WTC11 (cell line): ENCODE measurements at regions of chr1 and their contacts with region 1.

Region 1: DNA sequence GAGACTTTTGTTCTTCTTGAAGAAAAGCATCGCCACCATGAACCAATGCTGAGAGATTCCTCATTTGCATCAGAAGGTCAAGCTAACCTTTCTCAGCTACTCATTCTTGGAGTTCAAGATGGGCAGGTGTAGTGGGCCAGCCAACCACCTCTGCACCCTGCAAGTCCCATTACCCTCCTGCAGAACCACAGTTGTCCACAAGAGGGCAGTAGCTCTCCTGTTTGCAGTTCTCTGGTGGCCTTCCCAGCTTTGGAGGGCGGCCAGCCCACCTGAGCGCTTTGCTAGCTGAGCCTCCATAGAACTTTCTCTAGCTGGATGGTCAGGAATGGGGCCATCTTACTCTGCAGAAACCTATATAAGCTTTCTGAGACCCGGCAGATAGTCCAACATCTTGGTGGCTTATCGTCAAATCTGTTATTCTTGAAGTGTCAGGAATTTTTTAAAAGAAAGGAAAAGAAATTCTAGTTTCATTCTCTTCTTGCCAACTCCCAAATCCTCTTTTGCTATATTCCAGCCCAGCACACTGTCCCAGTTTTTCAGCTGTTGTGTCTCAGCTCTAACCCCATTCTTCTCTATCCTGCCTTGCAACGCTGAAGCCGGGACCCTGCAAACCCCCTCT is 11.0 kb upstream of the LMX1A start:
- DNase-seq: peak; percentile 97
- ATAC-seq: peak; percentile 93
- H3K4me3 Mint-ChIP-seq: no peak overlapping the region
- H3K27ac Mint-ChIP-seq: no peak overlapping the region
- H3K4me1 Mint-ChIP-seq: peaks cover 12% of the 10 kb centered on the region
- H3K27me3 Mint-ChIP-seq: peaks cover 33% of the 10 kb centered on the region
- CTCF ChIP-seq: peak; percentile 95

Region 2: DNA sequence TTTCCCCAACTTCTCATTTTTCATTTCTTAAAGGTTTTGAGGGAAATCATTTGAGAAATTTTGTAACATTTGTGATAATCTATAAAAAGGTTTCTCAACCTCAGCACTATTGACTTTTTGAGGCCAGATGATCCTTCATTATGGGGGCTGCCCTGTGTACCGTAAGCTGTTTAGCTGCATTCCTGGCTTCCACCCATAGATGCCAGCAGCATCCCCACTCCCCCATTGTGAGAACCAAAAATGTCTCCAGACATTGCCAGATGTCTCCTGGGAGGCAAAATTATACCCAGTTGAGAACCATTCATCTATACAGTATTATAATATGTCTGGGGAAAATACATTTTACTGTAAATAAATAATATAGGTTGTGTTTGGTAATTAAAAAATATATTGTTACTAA is 662.5 kb before region 1 on chr1:
- CTCF ChIA-PET with region 1: no interaction called
- POLR2A ChIA-PET with region 1: no interaction called
- DNase-seq: no peak
- ATAC-seq: peak; percentile 67
- H3K4me3 Mint-ChIP-seq: no peak overlapping the region
- H3K27ac Mint-ChIP-seq: no peak overlapping the region
- H3K4me1 Mint-ChIP-seq: peaks cover 74% of the 10 kb centered on the region
- H3K27me3 Mint-ChIP-seq: no peaks in the 10 kb centered on the region
- CTCF ChIP-seq: no peak

Region 3: DNA sequence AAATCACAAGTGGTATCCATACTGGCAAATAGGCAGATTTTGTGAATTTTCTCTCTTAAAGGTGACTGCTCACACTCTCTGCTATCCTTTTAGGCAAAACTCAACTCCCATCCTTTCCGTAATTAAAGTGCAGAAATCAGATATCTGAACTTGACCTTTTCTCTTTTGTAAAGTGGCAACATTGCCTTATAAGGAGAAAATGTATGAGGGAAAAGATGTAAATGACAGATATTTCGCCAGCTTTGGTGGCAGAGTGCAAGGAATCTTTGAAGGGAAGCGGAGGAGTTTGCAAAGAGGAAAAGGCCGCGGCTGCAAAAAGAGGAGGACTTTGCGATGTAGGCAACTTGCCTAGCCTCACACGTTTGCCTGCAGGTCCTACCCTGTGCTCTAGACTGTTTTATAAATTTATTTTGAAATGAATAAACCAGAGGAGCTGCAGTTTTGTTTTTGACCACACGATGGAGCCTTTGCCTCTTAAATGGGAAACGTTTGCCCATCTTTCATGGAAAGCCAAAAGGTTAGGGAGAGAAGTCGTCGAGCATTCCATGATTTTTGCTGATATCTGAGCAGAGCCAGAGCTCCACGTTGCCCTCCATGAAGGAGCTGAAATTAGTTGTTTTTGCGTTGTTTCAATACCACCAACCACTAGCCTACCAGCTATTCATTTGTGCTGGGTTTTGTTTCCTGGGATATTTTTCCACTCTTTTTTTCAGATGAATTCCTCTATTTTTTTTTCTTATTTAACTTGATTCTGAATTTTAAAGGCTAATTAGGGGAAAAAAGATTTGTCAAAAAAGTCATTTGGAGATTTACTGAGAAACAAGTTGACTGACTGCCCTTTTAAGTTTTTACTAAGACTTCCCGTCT is 253.2 kb before region 1 on chr1:
- CTCF ChIA-PET with region 1: interaction called, 30 read pairs
- POLR2A ChIA-PET with region 1: interaction called, 3 read pairs
- DNase-seq: peak; percentile 72
- ATAC-seq: peak; percentile 75
- H3K4me3 Mint-ChIP-seq: no peak overlapping the region
- H3K27ac Mint-ChIP-seq: no peak overlapping the region
- H3K4me1 Mint-ChIP-seq: peaks cover 13% of the 10 kb centered on the region
- H3K27me3 Mint-ChIP-seq: peaks cover 50% of the 10 kb centered on the region
- CTCF ChIP-seq: peak; percentile 69

Region 4: GRCh38 chr1:165144757-165145397 is 222.6 kb before region 1 on chr1:
- CTCF ChIA-PET with region 1: interaction called, 27 read pairs
- POLR2A ChIA-PET with region 1: no interaction called
- DNase-seq: peak; percentile 71
- ATAC-seq: peak; percentile 90
- H3K4me3 Mint-ChIP-seq: no peak overlapping the region
- H3K27ac Mint-ChIP-seq: no peak overlapping the region
- H3K4me1 Mint-ChIP-seq: no peaks in the 10 kb centered on the region
- H3K27me3 Mint-ChIP-seq: peaks cover 29% of the 10 kb centered on the region
- CTCF ChIP-seq: no peak

Region 5: GRCh38 chr1:165257969-165258459 is 109.5 kb before region 1 on chr1:
- CTCF ChIA-PET with region 1: interaction called, 91 read pairs
- POLR2A ChIA-PET with region 1: no interaction called
- DNase-seq: peak; percentile 87
- ATAC-seq: peak; percentile 92
- H3K4me3 Mint-ChIP-seq: no peak overlapping the region
- H3K27ac Mint-ChIP-seq: no peak overlapping the region
- H3K4me1 Mint-ChIP-seq: peaks cover 13% of the 10 kb centered on the region
- H3K27me3 Mint-ChIP-seq: peaks cover 30% of the 10 kb centered on the region
- CTCF ChIP-seq: peak; percentile 79

Region 6: GRCh38 chr1:165317612-165318011 is 49.9 kb before region 1 on chr1:
- CTCF ChIA-PET with region 1: interaction called, 18 read pairs
- POLR2A ChIA-PET with region 1: interaction called, 3 read pairs
- DNase-seq: no peak
- ATAC-seq: no peak
- H3K4me3 Mint-ChIP-seq: no peak overlapping the region
- H3K27ac Mint-ChIP-seq: no peak overlapping the region
- H3K4me1 Mint-ChIP-seq: no peaks in the 10 kb centered on the region
- H3K27me3 Mint-ChIP-seq: no peaks in the 10 kb centered on the region; the same call in none of the 2 replicates
- CTCF ChIP-seq: no peak

Region 7: GRCh38 chr1:165355977-165356811 is 11.3 kb before region 1 on chr1 and contains the start of gene LMX1A:
- CTCF ChIA-PET with region 1: interaction called, 137 read pairs
- POLR2A ChIA-PET with region 1: no interaction called
- DNase-seq: peak; percentile 53
- ATAC-seq: peak; percentile 11
- H3K4me3 Mint-ChIP-seq: peak within 1 kb of the TSS; percentile 74
- H3K27ac Mint-ChIP-seq: no peak within 1 kb of the TSS
- H3K4me1 Mint-ChIP-seq: peaks cover 47% of the 10 kb centered on the region
- H3K27me3 Mint-ChIP-seq: peaks cover 96% of the 10 kb centered on the region
- CTCF ChIP-seq: no peak
- total RNA-seq, gene LMX1A: not detected in 3 replicates

Region 8: GRCh38 chr1:165392634-165393571 is 25.4 kb after region 1 on chr1:
- CTCF ChIA-PET with region 1: interaction called, 27 read pairs
- POLR2A ChIA-PET with region 1: no interaction called
- DNase-seq: peak; percentile 84
- ATAC-seq: peak; percentile 99
- H3K4me3 Mint-ChIP-seq: peak overlapping the region; percentile 64
- H3K27ac Mint-ChIP-seq: no peak overlapping the region
- H3K4me1 Mint-ChIP-seq: peaks cover 7% of the 10 kb centered on the region
- H3K27me3 Mint-ChIP-seq: peaks cover 24% of the 10 kb centered on the region
- CTCF ChIP-seq: peak; percentile 87

Region 9: DNA sequence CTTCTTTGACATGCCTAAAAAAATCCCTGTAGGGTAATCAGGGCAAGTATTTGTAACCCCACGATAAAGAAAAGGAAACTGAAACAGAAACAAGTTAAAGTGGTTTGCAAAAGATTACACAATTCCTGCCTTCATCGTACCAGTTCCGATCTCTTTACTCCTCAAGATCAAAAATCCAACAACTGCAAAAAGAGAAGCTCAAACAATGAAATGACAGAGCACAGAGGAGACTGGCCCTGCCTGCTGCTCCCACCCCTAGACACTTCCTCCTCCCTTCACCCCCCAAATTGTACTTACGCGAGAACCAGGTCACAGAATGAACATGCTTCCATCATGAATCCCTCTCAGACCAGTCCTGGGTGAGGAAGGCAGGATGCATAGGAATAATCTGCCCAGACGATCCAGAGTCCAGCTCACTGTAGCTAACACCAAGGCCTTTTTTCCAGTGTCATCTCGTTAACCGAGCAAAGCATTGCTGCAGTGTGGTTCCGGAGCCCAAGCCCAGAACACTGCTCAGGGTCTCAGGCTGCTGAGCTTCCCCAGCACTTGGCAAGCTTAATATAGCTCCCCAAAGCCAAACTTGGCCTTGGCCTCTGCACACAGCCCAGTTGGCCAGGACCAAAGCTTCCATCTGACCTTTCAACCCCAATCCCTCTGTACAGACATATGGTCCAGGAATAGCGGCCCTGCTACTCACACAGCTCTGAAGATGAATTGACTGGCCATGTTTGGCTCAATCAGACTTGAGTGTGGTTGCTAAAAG is 57.2 kb after region 1 on chr1:
- CTCF ChIA-PET with region 1: no interaction called
- POLR2A ChIA-PET with region 1: no interaction called
- DNase-seq: no peak
- ATAC-seq: no peak
- H3K4me3 Mint-ChIP-seq: no peak overlapping the region
- H3K27ac Mint-ChIP-seq: no peak overlapping the region
- H3K4me1 Mint-ChIP-seq: no peaks in the 10 kb centered on the region
- H3K27me3 Mint-ChIP-seq: no peaks in the 10 kb centered on the region
- CTCF ChIP-seq: no peak